ENCODE measurements at regions of chr9 and their contacts with region 1.

Region 1: GRCh38 chr9:91422758-91423711 is 597 bp downstream of the NFIL3 start:
- DNase-seq: peak; percentile 74
- H3K4me3 Mint-ChIP-seq: peak overlapping the region; percentile 86
- H3K27ac Mint-ChIP-seq: peak overlapping the region; percentile 93
- H3K4me1 Mint-ChIP-seq: peaks cover 63% of the 10 kb centered on the region
- H3K27me3 Mint-ChIP-seq: no peaks in the 10 kb centered on the region

Region 2: GRCh38 chr9:90914868-90915483 is 508.1 kb before region 1 on chr9:
- CTCF ChIA-PET with region 1: interaction called, 55 read pairs
- POLR2A ChIA-PET with region 1: interaction called, 13 read pairs
- DNase-seq: peak; percentile 80
- H3K4me3 Mint-ChIP-seq: no peak overlapping the region
- H3K27ac Mint-ChIP-seq: no peak overlapping the region
- H3K4me1 Mint-ChIP-seq: peaks cover 7% of the 10 kb centered on the region
- H3K27me3 Mint-ChIP-seq: no peaks in the 10 kb centered on the region

Region 3: DNA sequence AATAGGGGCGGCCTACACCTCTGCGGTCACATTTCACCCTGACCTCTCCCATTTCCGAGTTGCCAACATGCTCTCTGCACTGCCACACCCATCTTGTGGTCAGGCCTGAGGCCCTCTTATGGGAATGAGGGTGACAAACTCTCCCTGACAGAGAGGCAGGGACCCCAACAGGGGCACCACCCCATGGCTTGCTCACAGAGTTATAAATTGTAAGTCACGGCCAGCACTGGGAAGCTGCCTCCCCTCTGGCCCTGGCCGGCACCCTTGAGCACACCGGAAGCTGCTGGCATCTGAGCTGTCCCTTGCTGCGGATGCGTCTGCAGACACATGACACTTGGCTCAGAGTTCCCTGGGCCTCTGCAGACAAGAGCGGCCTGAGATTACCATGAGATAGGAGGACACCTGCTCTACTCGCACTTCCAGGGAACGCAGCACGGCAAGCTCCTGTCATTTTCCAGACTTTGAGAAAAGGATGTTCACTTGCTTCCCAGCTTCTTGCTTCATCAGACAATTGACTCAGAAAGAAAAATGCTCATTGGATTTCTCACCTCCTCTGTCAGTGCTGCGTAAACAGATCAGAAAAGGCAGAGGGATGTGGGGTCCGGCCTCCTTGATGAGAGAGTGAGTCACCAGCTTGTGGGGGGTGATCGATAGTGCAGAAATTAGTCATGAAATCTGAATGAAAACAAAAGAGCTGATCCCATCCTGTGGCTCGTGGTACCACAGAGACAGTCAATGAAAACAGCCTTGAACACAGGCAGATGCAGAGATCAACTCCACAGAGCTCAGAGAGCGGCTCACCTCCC is 351.6 kb before region 1 on chr9:
- CTCF ChIA-PET with region 1: interaction called, 4 read pairs
- POLR2A ChIA-PET with region 1: interaction called, 22 read pairs
- DNase-seq: peak; percentile 83
- H3K4me3 Mint-ChIP-seq: peak overlapping the region; percentile 31
- H3K27ac Mint-ChIP-seq: peak overlapping the region; percentile 77
- H3K4me1 Mint-ChIP-seq: peaks cover 33% of the 10 kb centered on the region
- H3K27me3 Mint-ChIP-seq: no peaks in the 10 kb centered on the region

Region 4: DNA sequence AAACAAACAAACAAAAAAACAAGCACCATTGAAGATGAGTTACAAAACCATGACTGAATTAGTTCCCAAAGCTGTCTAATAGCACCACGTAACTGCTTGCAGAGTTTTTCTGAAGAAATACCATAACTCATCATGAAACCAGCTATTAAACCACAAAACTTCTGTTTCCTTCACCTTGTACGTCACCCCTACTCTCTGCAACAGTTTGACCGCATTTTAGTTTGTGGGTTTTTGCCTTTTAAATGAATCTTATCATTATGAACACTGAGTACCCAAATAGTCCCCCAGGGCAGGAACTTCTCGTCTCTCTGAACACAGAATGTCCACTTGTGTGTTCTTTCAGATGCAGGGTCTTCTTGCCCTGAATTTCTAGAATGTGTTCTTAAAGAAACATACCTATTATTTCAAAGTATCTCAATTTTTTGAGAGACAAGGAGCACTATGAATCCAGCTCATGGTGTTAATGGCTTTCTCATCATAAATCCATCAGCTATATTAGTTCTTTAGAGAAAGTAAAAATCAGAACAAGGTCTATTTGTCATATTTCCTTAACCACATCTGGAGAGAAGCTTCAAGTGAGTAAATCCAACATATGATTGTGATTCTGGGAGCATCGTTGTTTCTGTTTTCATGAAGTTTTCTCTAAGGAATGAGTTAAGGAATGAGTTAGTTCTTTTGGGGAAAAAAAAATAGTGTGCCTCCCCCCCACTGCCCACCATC is 271.9 kb before region 1 on chr9:
- CTCF ChIA-PET with region 1: interaction called, 9 read pairs
- POLR2A ChIA-PET with region 1: interaction called, 61 read pairs
- DNase-seq: peak; percentile 65
- H3K4me3 Mint-ChIP-seq: peak overlapping the region; percentile 48
- H3K27ac Mint-ChIP-seq: peak overlapping the region; percentile 91
- H3K4me1 Mint-ChIP-seq: peaks cover 94% of the 10 kb centered on the region
- H3K27me3 Mint-ChIP-seq: no peaks in the 10 kb centered on the region

Region 5: DNA sequence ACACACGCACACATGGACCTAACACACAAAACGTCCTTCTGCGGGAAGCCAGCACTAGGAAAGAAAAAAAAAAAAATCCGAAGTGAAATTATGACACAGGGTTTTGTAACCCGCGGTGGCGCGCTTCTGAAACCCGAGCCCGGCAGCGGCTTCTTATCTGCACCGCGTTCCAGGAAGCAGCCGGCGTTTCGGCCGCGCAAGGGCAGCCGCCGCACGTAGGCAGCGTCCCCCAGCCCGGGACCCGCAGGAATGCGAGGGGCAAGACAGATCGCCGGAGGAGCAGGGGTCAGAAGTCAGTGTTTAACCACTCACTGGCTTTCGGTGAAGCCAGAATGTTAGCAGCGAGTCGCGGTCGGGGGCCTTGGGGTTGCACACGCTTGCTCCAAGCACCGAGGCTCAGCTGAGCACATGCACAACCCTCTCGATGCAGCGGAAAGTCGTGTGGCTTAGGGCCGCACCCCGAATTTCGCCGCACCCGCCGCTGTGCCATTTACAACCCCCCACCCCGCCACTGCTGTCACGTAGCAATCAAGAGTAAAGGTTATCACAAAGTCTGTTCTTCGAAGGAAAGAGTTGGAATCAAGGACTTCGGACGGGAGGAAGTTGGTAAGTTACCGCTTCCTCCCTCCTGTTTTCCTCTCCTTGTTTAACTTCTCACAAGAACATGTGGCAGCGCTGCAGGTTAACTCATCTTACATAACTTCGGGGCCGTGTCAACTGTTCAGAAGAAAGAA is 229.2 kb before region 1 on chr9:
- CTCF ChIA-PET with region 1: interaction called, 7 read pairs
- POLR2A ChIA-PET with region 1: interaction called, 54 read pairs
- DNase-seq: peak; percentile 92
- H3K4me3 Mint-ChIP-seq: peak overlapping the region; percentile 77
- H3K27ac Mint-ChIP-seq: peak overlapping the region; percentile 98
- H3K4me1 Mint-ChIP-seq: peaks cover 75% of the 10 kb centered on the region
- H3K27me3 Mint-ChIP-seq: no peaks in the 10 kb centered on the region

Region 6: GRCh38 chr9:91341239-91341746 is 81.7 kb before region 1 on chr9:
- CTCF ChIA-PET with region 1: interaction called, 6 read pairs
- POLR2A ChIA-PET with region 1: interaction called, 102 read pairs
- DNase-seq: no peak
- H3K4me3 Mint-ChIP-seq: no peak overlapping the region
- H3K27ac Mint-ChIP-seq: peak overlapping the region; percentile 1
- H3K4me1 Mint-ChIP-seq: peaks cover 55% of the 10 kb centered on the region
- H3K27me3 Mint-ChIP-seq: no peaks in the 10 kb centered on the region

Region 7: DNA sequence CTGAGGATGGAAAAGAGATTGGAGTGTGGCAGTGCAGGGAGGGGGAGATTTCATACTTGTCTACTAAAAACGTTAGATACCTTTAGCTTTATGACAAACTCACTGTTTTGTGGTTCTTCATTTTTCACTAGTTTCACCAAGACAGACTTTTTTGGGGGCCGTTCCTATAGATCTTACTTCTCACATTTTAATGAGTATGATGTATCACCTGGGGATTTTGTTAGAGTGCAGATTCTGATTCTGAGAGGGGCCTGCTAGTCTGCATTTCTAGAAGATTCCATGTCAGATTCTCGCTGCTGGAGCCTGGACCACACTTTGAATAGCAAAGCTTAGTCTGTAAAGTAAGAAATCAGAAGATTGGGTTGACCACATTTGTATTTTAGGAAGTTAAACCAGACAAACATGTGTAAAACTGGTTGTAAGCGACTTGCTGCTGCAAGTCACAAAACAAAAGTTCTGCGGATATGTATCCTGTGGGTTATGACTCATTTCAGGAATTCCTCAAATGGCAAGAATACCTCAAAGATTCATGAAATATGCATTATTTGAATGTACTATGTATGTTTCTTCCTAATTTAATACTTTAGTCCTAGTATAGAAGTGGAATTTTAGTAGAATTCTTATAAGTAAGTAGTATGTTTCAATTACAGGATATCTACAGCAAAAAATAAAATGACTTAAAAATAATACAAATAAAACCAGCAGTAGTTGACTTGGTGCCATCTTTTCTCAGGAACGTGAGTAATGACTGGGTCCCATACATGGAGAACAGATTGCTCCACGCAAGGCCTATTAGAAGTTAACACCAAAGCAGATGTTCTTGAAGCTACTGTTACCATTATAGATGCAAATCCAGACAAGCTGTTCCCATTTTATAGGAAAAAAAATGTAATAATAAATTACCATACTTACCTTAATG is 27.2 kb before region 1 on chr9:
- CTCF ChIA-PET with region 1: interaction called, 9 read pairs
- POLR2A ChIA-PET with region 1: interaction called, 15 read pairs
- DNase-seq: peak; percentile 29
- H3K4me3 Mint-ChIP-seq: peak overlapping the region; percentile 41
- H3K27ac Mint-ChIP-seq: peak overlapping the region; percentile 77
- H3K4me1 Mint-ChIP-seq: peaks cover 26% of the 10 kb centered on the region
- H3K27me3 Mint-ChIP-seq: no peaks in the 10 kb centered on the region

Region 8: DNA sequence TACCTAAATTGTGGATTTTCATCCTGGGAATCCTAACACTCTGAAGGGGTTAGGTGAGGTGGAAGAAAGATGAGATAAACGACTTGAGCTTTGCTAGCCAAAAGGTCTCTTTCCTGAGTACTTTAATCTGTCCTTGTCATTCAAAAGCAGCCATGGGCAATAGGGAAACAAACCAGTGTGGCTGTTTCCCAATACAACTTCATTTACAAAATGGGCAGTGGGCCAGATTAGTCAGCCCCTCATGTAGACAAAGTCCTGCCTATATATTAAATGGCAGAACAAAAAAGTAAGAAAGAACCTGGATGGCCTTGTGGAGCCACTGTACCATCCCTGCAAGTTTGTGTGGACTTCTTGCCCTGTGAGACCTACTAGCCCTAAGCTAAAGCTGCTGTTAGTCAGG is 51.6 kb after region 1 on chr9:
- CTCF ChIA-PET with region 1: no interaction called
- POLR2A ChIA-PET with region 1: no interaction called
- DNase-seq: no peak
- H3K4me3 Mint-ChIP-seq: no peak overlapping the region
- H3K27ac Mint-ChIP-seq: no peak overlapping the region
- H3K4me1 Mint-ChIP-seq: no peaks in the 10 kb centered on the region
- H3K27me3 Mint-ChIP-seq: peaks cover 54% of the 10 kb centered on the region

Measured in activated CD4-positive, alpha-beta memory T cell treated with anti-CD3 and anti-CD28 coated beads, Interleukin-2, amount 10 ng/mL, durations not matched to agents 7 days and 5 days (primary cell).